PC-9 (cell line): ENCODE measurements at regions of chr1 and their contacts with region 1.

Region 1: GRCh38 chr1:170010443-170010842 is 64.1 kb downstream of the KIFAP3 start:
- DNase-seq: no peak
- H3K4me3 ChIP-seq: no peak overlapping the region
- H3K27ac ChIP-seq: no peak overlapping the region
- H3K4me1 ChIP-seq: no peaks in the 10 kb centered on the region
- H3K27me3 ChIP-seq: no peaks in the 10 kb centered on the region
- CTCF ChIP-seq: peak; percentile 81

Region 2: GRCh38 chr1:169928438-169929209 is 81.8 kb before region 1 on chr1:
- CTCF ChIA-PET with region 1: no interaction called
- POLR2A ChIA-PET with region 1: no interaction called
- intact Hi-C with region 1: loop called (anchors 5 kb)
- DNase-seq: peak in 1 of 2 experiments; percentile 54
- H3K4me3 ChIP-seq: no peak overlapping the region
- H3K27ac ChIP-seq: no peak overlapping the region
- H3K4me1 ChIP-seq: peaks cover 12% of the 10 kb centered on the region
- H3K27me3 ChIP-seq: no peaks in the 10 kb centered on the region
- CTCF ChIP-seq: peak; percentile 83

Region 3: GRCh38 chr1:170445096-170445495 is 434.7 kb after region 1 on chr1:
- CTCF ChIA-PET with region 1: no interaction called
- POLR2A ChIA-PET with region 1: no interaction called
- intact Hi-C with region 1: loop called (anchors 10 kb)
- DNase-seq: no peak
- H3K4me3 ChIP-seq: no peak overlapping the region
- H3K27ac ChIP-seq: peak overlapping the region; percentile 48; the same call in 1 of the 2 replicates
- H3K4me1 ChIP-seq: peaks cover 12% of the 10 kb centered on the region
- H3K27me3 ChIP-seq: no peaks in the 10 kb centered on the region
- CTCF ChIP-seq: no peak

Region 4: DNA sequence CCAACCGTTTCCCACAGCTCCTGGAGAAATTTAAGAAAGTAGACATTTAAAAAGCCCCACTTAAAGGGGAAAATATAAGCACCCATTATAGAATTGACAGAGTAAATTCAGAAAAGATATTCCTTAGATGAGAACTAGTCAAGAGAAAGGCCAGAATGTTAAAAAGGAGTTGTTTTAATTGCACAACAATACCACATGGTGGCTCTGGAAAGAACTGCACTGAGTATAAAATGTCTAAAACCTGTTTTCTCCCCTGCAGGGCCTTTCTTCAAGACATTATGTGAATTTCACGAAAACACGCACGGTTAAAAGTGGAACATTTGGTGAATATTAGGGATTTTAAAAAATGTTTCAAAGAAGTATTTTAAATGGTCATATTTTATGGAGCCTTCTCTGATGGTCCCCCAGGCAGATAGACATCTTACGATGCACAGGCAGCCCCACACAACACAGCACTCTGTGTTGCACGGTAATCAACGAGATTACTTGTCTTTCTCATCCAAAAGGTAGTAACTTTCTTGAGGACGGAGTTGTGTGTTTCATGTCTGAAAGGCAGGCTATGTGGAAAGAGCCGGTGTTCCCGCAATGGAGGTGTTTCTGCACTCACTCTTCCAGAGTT is 755.4 kb after region 1 on chr1:
- CTCF ChIA-PET with region 1: no interaction called
- POLR2A ChIA-PET with region 1: no interaction called
- intact Hi-C with region 1: loop called (anchors 10 kb)
- DNase-seq: no peak
- H3K4me3 ChIP-seq: no peak overlapping the region
- H3K27ac ChIP-seq: no peak overlapping the region
- H3K4me1 ChIP-seq: no peaks in the 10 kb centered on the region
- H3K27me3 ChIP-seq: no peaks in the 10 kb centered on the region
- CTCF ChIP-seq: peak; percentile 37; the same call in 1 of the 2 replicates